ENCODE measurements at regions of chr6 and their contacts with region 1.

Region 1: DNA sequence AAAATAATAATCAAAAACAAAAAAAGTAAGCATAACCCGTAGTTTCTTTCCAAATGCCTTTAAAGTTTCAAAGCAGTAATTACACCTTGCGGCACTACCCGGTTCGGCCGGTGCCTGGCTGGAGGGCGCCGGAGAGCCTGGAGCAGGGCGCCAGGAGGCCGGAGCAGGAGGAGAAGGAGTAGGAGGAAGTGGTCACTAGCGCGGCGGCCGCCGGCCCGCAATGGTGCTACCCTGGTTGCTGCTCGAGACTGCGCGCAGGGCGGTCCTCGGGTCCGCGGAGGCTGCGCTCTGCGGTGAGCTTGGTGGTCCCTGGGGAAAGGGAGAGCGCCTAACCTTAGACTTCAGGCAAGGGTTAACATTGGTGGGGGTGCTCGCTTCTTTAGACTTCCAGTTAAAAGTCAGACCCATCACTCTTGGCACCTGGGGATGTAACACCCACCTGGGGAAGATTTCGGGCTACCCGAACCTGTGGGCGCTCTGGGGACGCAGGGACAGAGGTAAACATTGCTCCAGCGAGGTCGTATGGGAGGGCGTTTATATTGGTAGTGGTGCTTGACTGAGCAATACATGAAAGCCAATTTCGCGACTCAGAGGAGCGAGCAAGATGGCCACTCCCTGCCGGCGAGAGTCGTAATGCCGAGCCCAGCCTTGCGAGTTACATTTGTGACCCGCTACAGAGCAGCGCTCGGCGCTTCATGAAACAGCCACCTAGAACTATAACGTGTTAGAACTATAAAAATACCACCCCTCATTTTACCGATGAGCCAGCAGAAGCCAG is 5.8 kb upstream of the USP45 start:
- DNase-seq: peak; percentile 77
- ATAC-seq: peak; percentile 95
- H3K4me3 ChIP-seq: peak overlapping the region; percentile 87
- H3K27ac ChIP-seq: peak overlapping the region; percentile 96
- H3K4me1 ChIP-seq: peaks cover 2% of the 10 kb centered on the region; the same call in 1 of the 2 replicates
- H3K27me3 ChIP-seq: no peaks in the 10 kb centered on the region
- CTCF ChIP-seq: peak; percentile 80
- POLR2A ChIP-seq: peak; percentile 84
- RAD21 ChIP-seq: peak; percentile 54

Region 2: DNA sequence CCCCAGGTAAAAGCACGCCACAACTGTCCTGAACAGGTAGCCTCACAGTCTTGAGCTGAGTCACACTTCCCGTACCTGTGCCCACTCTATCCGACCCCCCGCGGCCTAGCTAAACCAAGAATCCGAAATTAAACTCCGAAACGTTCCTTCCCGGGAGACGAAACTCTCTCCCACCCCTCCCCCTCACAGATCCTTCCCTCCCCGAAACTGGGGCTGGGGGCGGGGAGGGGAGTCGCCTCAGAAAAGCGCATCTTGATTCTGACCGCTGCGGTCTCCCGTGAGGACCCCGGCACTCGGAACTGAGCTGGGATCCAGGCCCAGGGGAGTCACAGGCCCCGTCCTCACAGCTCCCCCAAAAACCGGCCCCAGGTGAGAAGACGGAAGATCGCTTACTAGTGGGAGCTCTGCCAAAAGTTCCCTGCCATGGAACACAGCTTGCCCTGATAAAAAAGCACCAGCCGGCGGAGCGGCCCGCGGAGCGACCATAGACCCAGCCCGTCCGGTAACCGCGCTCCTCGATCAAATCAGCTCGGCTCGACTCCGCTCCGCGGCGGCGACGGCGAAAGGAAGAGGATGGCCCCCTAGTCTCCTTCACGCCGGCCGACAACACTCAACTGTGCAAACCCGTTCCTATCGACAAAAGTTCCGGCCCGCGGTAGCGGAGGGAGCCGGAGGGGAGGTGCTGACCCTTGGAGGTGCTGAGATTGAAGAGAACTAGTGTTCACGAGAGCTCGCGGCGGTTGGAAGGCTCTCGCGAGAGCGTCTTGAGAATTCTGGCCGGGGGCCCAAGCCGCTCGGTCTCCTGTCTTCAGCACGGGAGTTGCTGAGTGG is 47.3 kb after region 1 on chr6 and contains the start of gene CCNC:
- CTCF ChIA-PET with region 1: no interaction called
- POLR2A ChIA-PET with region 1: no interaction called
- dilution Hi-C with region 1: no loop called
- in situ Hi-C with region 1: no loop called
- intact Hi-C with region 1: loop called (anchors 2 kb)
- DNase-seq: peak; percentile 96
- ATAC-seq: peak; percentile 100
- H3K4me3 ChIP-seq: peak within 1 kb of the TSS; percentile 87
- H3K27ac ChIP-seq: peak within 1 kb of the TSS; percentile 64
- H3K4me1 ChIP-seq: no peaks in the 10 kb centered on the region
- H3K27me3 ChIP-seq: no peaks in the 10 kb centered on the region; the same call in 1 of the 2 replicates
- CTCF ChIP-seq: no peak
- POLR2A ChIP-seq: peak; percentile 91
- RAD21 ChIP-seq: no peak
- total RNA-seq, gene CCNC: 95.7 and 127 TPM in 2 replicates